ENCODE measurements at regions of chr1 and their contacts with region 1.

Region 1: DNA sequence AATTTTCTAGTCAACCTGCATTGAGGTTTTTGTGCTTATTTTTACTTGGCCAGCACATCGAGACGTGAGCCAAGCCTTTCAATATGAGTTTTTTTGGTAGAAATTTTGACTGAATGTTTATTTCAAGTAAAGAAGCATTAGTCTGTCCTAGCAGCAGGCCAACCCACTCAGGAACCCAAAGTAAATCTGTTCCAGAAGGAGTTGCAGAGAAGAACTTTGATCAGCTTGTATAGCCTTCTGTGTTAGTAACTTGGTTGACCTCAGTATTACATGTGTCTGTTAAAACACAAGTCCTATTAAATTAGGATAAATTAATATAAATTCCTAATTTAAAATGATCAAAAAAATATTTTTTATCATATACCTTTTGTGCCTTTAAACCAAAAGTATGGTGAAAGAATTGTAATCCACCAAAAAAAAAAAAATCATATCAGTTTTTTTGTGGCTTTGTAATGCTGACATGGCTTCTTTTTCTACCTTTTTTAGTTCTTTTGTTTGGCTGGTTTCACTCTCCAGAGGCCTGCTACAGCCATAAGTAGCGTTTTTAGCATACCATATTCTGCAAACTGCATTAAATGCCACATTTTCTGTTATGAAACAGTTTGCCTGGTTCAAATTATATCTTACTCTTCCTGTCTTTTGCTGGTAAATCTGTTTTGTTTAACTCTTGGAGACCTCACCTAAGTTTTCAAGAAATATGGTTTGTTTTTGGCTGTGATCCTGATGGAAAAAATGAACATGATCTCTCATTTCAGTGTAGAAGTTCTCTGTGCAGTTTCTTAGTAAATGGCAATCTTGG is 39.5 kb downstream of the ATF6 start:
- DNase-seq: no peak
- H3K4me3 ChIP-seq: no peak overlapping the region
- H3K27ac ChIP-seq: peak overlapping the region in 3 of 4 donors; percentile 30 to 65 (median 58)
- H3K4me1 ChIP-seq: peaks cover 0 to 72% (median 54%) of the 10 kb centered on the region in 4 donors
- H3K27me3 ChIP-seq: no peaks in the 10 kb centered on the region
- CTCF ChIP-seq: no peak
- EP300 ChIP-seq: no peak
- POLR2A ChIP-seq: no peak

Region 2: DNA sequence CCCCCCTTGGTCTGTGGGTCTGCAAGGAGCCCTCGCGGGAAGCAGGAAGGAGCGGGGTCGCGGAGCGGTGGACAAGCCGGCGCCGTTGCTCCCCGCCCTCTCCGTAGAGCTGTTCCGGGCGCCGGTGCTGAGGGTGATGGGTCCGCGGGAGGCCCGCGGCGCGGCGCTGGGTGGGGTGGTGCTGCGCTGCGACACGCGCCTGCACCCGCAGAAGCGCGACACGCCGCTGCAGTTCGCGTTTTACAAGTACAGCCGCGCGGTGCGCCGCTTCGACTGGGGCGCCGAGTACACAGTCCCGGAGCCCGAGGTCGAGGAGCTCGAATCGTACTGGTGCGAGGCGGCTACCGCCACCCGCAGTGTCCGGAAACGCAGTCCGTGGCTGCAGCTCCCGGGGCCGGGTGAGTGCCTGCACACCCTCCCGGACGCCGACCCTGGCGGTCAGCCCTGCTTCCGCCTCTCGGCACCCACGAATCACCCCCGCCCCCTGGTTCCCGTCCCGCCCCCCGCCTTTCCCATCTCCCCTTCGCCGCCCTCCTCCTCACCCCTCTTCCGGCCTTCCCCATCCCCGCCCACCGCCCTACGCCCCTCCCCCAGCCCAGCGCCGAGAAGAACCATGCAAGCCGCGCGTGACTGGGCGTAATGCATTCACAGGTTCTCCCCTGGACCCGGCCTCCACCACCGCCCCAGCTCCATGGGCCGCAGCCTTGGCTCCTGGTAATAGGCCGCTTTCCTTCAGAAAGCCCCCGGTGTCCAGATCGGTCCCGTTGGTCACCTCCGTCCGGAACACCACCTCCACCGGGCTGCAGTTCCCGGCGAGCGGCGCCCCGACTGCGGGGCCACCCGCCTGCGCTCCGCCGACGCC is 78.8 kb before region 1 on chr1:
- intact Hi-C with region 1: no loop called
- DNase-seq: peak; percentile 94
- H3K4me3 ChIP-seq: peak overlapping the region; percentile 54 to 91 (median 78)
- H3K27ac ChIP-seq: peak overlapping the region; percentile 78 to 88 (median 80)
- H3K4me1 ChIP-seq: peaks cover 0 to 17% (median 13%) of the 10 kb centered on the region in 4 donors
- H3K27me3 ChIP-seq: no peaks in the 10 kb centered on the region
- CTCF ChIP-seq: no peak
- EP300 ChIP-seq: no peak
- POLR2A ChIP-seq: no peak

Region 3: DNA sequence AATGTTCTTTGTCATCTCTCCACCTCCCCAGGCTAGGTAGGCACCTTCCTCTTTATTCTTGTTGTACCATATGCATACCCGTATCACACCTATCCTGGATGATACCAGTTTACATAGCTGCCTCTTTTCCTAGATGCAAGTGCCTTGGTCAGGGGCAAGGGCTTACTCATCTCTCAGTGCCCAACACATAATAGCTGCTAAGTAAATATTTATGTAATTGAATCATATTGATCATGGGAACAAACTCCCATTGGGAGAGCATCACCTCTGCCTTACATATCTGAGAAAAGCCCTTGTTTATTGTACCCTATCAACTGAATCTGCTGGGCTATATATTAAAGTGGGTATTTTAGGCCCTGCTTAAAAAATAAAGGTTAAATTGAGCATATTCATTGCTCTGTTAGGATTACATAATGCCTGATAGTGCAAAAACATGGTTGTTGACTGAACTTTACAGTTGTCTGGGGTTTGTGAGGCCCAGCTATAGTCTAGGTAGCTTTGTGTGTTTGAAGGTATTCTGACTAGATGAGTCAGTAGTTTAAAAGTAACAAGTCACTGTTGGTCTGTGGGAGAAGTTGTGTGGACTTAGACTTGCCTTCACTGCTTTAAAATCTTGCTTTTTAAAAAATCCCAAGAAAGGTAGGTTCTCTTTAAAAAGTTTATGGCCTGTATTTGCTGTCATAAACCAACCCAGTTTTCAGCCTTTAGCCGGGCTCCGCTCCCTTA is 135.4 kb after region 1 on chr1:
- intact Hi-C with region 1: loop called (anchors 5 kb)
- DNase-seq: no peak
- H3K4me3 ChIP-seq: no peak overlapping the region
- H3K27ac ChIP-seq: no peak overlapping the region
- H3K4me1 ChIP-seq: peaks cover 0 to 4% (median 0%) of the 10 kb centered on the region in 4 donors
- H3K27me3 ChIP-seq: no peaks in the 10 kb centered on the region
- CTCF ChIP-seq: no peak
- EP300 ChIP-seq: no peak
- POLR2A ChIP-seq: no peak